Endothelial cell of umbilical vein (primary cell): ENCODE measurements at regions of chr1 and their contacts with region 1.

Region 1: GRCh38 chr1:27392096-27392777 is at the start of gene GPR3:
- DNase-seq: peak; percentile 93
- H3K4me3 ChIP-seq: peak within 1 kb of the TSS; percentile 46 to 80 (median 70)
- H3K27ac ChIP-seq: peak within 1 kb of the TSS; percentile 73
- H3K4me1 ChIP-seq: peaks cover 21% of the 10 kb centered on the region
- H3K27me3 ChIP-seq: no peaks in the 10 kb centered on the region
- CTCF ChIP-seq: peak; percentile 66 to 72
- POLR2A ChIP-seq: no peak
- total RNA-seq, gene GPR3: 1.8 and 2.4 TPM in 2 replicates

Region 2: GRCh38 chr1:27300341-27301051 is 91.7 kb before region 1 on chr1:
- CTCF ChIA-PET with region 1: interaction called, 275 read pairs
- POLR2A ChIA-PET with region 1: no interaction called
- dilution Hi-C with region 1: no loop called
- intact Hi-C with region 1: loop called (anchors 1 kb)
- DNase-seq: peak; percentile 89
- H3K4me3 ChIP-seq: no peak overlapping the region
- H3K27ac ChIP-seq: no peak overlapping the region
- H3K4me1 ChIP-seq: no peaks in the 10 kb centered on the region
- H3K27me3 ChIP-seq: no peaks in the 10 kb centered on the region
- CTCF ChIP-seq: peak; percentile 95 to 98
- POLR2A ChIP-seq: no peak

Region 3: DNA sequence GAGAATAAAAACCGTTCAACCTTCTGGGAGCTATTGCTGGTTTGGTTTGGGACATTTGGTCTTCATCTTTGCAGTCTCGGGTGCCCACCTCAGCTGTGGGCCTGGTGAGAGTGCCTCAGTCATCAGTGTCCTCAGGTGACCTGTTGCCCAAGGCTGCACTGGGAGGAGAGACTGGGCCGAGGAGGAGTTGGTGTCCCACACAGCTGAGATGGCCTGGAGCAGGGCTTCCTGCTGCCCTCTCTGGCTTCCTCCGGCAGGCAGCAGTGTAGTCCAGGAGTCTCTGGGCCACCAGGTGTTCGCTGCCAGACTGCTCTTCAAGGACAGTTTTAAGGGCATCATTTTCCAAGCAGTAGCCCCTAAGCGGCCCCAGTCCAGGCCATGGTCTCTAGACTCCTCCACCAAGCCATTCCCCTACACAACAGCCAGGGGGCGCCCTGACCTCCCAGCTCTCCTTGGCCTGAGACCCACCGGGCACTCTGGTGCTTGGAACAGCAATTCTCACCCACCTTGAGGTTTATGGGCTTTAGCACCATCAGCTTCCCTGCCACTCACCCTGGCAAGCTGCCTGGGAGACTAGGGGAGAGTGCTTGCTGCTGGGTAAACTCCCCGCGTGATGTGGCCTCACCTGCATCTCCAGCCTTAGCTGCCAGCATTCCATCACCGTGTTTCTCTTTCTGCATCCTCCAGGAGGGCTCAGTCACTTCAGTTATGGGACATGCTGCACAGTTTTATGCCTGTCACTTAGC is 59.5 kb before region 1 on chr1:
- CTCF ChIA-PET with region 1: interaction called, 40 read pairs
- POLR2A ChIA-PET with region 1: no interaction called
- dilution Hi-C with region 1: no loop called
- intact Hi-C with region 1: loop called (anchors 1 kb)
- DNase-seq: peak; percentile 12
- H3K4me3 ChIP-seq: no peak overlapping the region
- H3K27ac ChIP-seq: no peak overlapping the region
- H3K4me1 ChIP-seq: no peaks in the 10 kb centered on the region
- H3K27me3 ChIP-seq: no peaks in the 10 kb centered on the region
- CTCF ChIP-seq: peak; percentile 84 to 91
- POLR2A ChIP-seq: no peak

Region 4: GRCh38 chr1:27357281-27358037 is 34.8 kb before region 1 on chr1:
- CTCF ChIA-PET with region 1: interaction called, 45 read pairs
- POLR2A ChIA-PET with region 1: no interaction called
- dilution Hi-C with region 1: no loop called
- intact Hi-C with region 1: loop called (anchors 1 kb)
- DNase-seq: peak; percentile 57
- H3K4me3 ChIP-seq: no peak overlapping the region
- H3K27ac ChIP-seq: no peak overlapping the region
- H3K4me1 ChIP-seq: no peaks in the 10 kb centered on the region
- H3K27me3 ChIP-seq: no peaks in the 10 kb centered on the region
- CTCF ChIP-seq: peak; percentile 90 to 99
- POLR2A ChIP-seq: no peak

Region 5: DNA sequence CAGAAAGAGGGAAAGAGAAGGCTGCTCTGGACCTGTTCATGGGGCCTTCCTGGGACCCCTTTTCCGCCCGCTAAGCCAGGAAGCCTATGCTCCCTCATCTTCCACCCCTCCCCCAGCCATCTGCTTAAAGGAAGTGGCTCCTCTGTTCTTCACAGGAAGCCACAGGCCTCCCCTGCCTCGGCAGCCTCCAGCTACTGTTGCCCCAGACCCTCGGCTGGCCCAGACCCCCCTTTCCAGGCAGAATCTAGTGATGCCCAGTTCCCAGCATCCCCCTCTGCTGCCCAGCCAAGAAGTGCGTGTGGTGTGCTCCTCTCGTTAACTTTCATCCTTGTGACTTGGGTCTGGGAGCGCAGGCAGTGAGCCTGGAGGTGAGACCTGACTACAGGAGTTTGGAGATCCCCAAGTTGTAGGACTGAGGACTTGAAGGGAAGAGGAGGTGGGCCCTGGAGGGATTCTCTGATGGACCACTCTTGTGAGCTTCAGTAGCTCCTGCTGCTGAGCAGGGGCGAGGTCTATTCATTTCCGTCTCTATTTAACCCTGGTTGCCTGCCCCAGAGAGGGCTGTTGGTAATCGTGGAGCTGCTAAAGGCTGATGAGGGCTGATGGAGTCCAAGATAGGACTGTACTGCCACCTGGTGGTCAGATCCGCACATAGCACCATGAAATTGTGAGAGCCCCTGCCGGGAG is 270.6 kb after region 1 on chr1:
- CTCF ChIA-PET with region 1: interaction called, 8 read pairs
- POLR2A ChIA-PET with region 1: no interaction called
- dilution Hi-C with region 1: no loop called
- intact Hi-C with region 1: loop called (anchors 1 kb)
- DNase-seq: peak; percentile 83
- H3K4me3 ChIP-seq: no peak overlapping the region
- H3K27ac ChIP-seq: no peak overlapping the region
- H3K4me1 ChIP-seq: peaks cover 14% of the 10 kb centered on the region
- H3K27me3 ChIP-seq: no peaks in the 10 kb centered on the region
- CTCF ChIP-seq: peak; percentile 80 to 85
- POLR2A ChIP-seq: no peak